Activated B cell treated with CpG ODN at 0.5 μM for 24 hours (primary cell): ENCODE measurements at regions of chr13 and their contacts with region 1.

Region 1: GRCh38 chr13:30465585-30466357 is at the start of gene HMGB1:
- DNase-seq: peak; percentile 86
- ATAC-seq: peak; percentile 83
- H3K4me3 Mint-ChIP-seq: peak within 1 kb of the TSS; percentile 93
- H3K27ac Mint-ChIP-seq: peak within 1 kb of the TSS; percentile 99
- H3K4me1 Mint-ChIP-seq: peaks cover 42% of the 10 kb centered on the region
- H3K27me3 Mint-ChIP-seq: peaks cover 3% of the 10 kb centered on the region
- CTCF ChIP-seq: no peak
- total RNA-seq, gene HMGB1: 338 and 354 TPM in 2 replicates

Region 2: GRCh38 chr13:30132623-30133553 is 332.9 kb before region 1 on chr13:
- CTCF ChIA-PET with region 1: interaction called, 24 read pairs
- POLR2A ChIA-PET with region 1: interaction called, 3 read pairs
- intact Hi-C with region 1: loop called (anchors 1 kb)
- DNase-seq: peak; percentile 90
- ATAC-seq: peak; percentile 100
- H3K4me3 Mint-ChIP-seq: no peak overlapping the region
- H3K27ac Mint-ChIP-seq: no peak overlapping the region
- H3K4me1 Mint-ChIP-seq: peaks cover 3% of the 10 kb centered on the region
- H3K27me3 Mint-ChIP-seq: no peaks in the 10 kb centered on the region
- CTCF ChIP-seq: peak; percentile 69

Region 3: DNA sequence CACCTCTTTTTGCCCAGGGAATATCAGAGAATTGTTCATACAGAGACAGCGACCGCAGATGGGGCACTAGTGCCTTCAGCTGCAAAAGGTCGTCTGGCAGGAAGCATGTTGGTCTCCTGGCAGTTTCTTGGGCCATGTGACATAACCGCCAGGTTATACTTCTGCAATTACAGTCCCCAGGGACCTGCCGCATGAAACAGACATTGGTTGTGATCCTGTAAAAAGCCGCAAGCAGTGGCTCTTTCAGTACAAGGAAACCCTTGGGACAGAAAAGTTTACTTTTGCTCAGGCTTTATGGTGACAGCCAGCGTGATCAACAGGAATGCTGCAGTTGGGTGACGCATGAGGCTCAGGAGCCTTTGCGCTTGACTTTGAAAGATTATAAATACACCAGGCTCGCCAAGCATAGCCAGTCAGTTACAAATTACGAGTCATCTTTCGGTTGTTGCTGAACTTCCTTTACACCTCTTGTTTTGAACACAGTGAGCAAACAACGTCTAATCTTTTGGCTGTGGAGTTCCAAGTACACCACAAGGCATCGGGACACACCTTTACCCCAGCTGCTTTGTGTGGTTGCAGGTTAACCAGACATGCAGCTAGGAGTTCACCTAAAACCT is 94.0 kb before region 1 on chr13:
- CTCF ChIA-PET with region 1: interaction called, 7 read pairs
- POLR2A ChIA-PET with region 1: interaction called, 47 read pairs
- intact Hi-C with region 1: loop called (anchors 1 kb)
- DNase-seq: peak; percentile 68
- ATAC-seq: peak; percentile 78
- H3K4me3 Mint-ChIP-seq: peak overlapping the region; percentile 78
- H3K27ac Mint-ChIP-seq: peak overlapping the region; percentile 84
- H3K4me1 Mint-ChIP-seq: peaks cover 85% of the 10 kb centered on the region
- H3K27me3 Mint-ChIP-seq: no peaks in the 10 kb centered on the region
- CTCF ChIP-seq: no peak

Region 4: DNA sequence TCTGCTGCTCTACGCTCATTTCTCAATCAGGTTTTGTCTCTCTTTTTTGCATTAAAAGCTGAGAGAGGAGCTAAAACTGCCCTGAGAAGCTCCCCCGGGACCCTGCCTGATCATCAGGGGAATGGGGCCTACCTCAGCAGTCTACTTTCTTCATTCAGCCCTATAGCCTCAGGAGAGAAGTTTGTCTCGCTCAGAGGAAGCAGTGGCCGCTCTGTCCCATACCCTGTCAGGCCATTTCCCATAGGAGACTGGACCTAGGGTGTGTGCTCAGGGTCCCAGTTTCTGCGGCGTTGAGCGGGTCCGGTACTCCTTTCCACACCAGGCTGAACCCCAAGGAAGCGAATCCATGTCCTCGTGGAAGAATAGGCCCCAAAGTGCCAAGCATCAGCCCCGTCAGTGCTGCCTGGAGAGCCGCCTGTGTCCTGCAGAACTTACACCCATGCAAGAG is 21.8 kb before region 1 on chr13:
- CTCF ChIA-PET with region 1: interaction called, 5 read pairs
- POLR2A ChIA-PET with region 1: interaction called, 21 read pairs
- intact Hi-C with region 1: loop called (anchors 1 kb)
- DNase-seq: peak; percentile 76
- ATAC-seq: peak; percentile 88
- H3K4me3 Mint-ChIP-seq: peak overlapping the region; percentile 79
- H3K27ac Mint-ChIP-seq: peak overlapping the region; percentile 97
- H3K4me1 Mint-ChIP-seq: peaks cover 72% of the 10 kb centered on the region
- H3K27me3 Mint-ChIP-seq: no peaks in the 10 kb centered on the region
- CTCF ChIP-seq: no peak

Region 5: GRCh38 chr13:30617315-30618185 is 151.8 kb after region 1 on chr13 and contains the start of gene USPL1:
- CTCF ChIA-PET with region 1: no interaction called
- POLR2A ChIA-PET with region 1: interaction called, 95 read pairs
- intact Hi-C with region 1: loop called (anchors 1 kb)
- DNase-seq: peak; percentile 98
- ATAC-seq: peak; percentile 84
- H3K4me3 Mint-ChIP-seq: no peak within 1 kb of the TSS
- H3K27ac Mint-ChIP-seq: no peak within 1 kb of the TSS
- H3K4me1 Mint-ChIP-seq: peaks cover 37% of the 10 kb centered on the region
- H3K27me3 Mint-ChIP-seq: no peaks in the 10 kb centered on the region
- CTCF ChIP-seq: no peak
- total RNA-seq, gene USPL1: 29.1 and 33.6 TPM in 2 replicates

Region 6: DNA sequence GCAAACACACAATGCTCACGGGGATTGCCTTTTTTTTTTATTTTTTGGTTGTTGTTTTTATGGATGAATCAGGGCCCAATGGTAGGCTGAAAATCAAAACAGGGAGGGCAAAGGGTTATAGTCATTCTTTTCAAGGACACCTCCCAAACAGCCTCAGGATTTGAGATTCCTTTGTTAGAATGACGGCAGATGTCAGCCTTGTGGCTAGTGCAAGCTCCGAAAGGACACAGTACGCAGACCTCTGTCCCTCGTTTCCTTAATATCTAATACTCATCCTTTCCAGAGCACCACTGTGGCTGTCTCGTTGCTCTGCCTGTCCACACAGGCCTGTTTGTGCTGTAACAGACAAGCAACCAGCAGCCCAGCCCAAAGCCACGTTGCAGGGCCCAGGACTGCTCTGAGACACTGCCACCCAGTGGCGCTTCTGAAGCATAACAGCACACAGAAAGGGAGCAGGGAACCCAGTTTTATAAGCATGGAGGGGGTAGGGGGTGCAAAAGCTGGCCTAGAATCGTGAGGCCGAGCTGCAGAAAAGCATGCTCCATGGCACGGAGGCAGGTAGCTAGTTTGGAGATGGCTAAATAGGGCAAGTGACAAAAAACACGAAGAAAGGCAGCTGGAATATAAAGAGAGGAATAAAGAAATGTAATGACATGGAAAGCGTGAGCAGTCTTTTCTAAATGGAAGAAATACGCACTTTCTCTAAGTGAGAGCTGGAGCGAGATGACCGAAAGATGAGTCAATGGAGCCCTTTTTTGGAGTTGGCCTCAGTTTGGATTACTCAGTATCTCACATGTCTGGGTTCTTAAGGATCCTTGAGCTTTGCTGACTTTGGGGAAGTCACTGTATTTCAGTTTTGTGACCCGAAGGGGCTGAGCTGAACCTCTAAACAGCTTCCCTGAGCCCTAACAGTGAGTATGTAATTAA is 399.6 kb after region 1 on chr13:
- CTCF ChIA-PET with region 1: no interaction called
- POLR2A ChIA-PET with region 1: no interaction called
- intact Hi-C with region 1: loop called (anchors 1 kb)
- DNase-seq: peak; percentile 29
- ATAC-seq: peak; percentile 96
- H3K4me3 Mint-ChIP-seq: no peak overlapping the region
- H3K27ac Mint-ChIP-seq: no peak overlapping the region
- H3K4me1 Mint-ChIP-seq: peaks cover 1% of the 10 kb centered on the region
- H3K27me3 Mint-ChIP-seq: peaks cover 13% of the 10 kb centered on the region
- CTCF ChIP-seq: peak; percentile 66